ENCODE measurements at regions of chr1 and their contacts with region 1.

Region 1: GRCh38 chr1:181088079-181089016 is at the start of gene IER5:
- DNase-seq: peak; percentile 95 to 97
- H3K4me3 ChIP-seq: peak within 1 kb of the TSS; percentile 76
- H3K4me3 Mint-ChIP-seq: peak within 1 kb of the TSS; percentile 97
- H3K27ac Mint-ChIP-seq: peak within 1 kb of the TSS; percentile 64
- H3K4me1 ChIP-seq: peaks cover 30% of the 10 kb centered on the region
- H3K4me1 Mint-ChIP-seq: peaks cover 26% of the 10 kb centered on the region
- H3K27me3 ChIP-seq: no peaks in the 10 kb centered on the region
- H3K27me3 Mint-ChIP-seq: no peaks in the 10 kb centered on the region
- CTCF ChIP-seq: no peak
- total RNA-seq, gene IER5: 8.6 and 9.4 TPM in 2 replicates

Region 2: DNA sequence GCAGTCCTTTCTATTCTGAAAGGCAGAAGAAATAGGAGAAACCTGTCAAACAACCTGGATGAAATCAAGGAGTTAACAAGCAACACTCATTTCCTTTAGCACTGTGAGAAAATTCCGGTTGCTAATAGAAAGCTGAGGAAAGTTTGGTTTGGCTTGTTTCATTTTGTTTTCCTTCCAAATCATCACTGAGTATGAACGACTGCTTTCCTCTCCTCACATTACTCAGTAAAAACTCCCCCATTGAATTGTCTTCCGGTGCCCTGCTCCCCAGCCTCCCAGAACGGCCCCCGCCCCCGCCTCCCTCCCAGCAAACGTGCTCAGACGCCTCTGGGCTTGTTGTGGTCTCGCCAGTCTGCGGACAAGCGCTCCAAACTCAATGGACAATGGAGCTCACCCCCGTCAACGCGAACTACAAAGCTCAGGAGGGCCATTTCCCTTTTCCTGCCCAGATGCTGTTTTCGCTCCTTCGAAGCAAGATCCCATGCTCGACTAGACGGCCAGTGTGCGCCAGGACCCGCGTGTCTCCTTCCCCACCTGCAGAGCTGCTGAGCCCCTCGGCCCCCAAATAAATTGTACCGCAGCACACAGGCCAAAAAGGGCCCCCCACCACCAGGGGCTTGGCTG is 66.4 kb before region 1 on chr1:
- CTCF ChIA-PET with region 1: interaction called, 6 read pairs
- POLR2A ChIA-PET with region 1: interaction called, 3 read pairs
- intact Hi-C with region 1: loop called (anchors 1 kb)
- DNase-seq: peak; percentile 58 to 71
- H3K4me3 ChIP-seq: peak overlapping the region; percentile 81
- H3K4me3 Mint-ChIP-seq: peak overlapping the region; percentile 90
- H3K27ac Mint-ChIP-seq: peak overlapping the region; percentile 96
- H3K4me1 ChIP-seq: 0 out of 2 replicates have a peak, but pooled peaks cover 5% of the 10 kb centered on the region
- H3K4me1 Mint-ChIP-seq: peaks cover 8% of the 10 kb centered on the region
- H3K27me3 ChIP-seq: no peaks in the 10 kb centered on the region
- H3K27me3 Mint-ChIP-seq: peaks cover 3% of the 10 kb centered on the region
- CTCF ChIP-seq: no peak

Region 3: GRCh38 chr1:181038399-181038873 is 49.9 kb before region 1 on chr1:
- CTCF ChIA-PET with region 1: interaction called, 5 read pairs
- POLR2A ChIA-PET with region 1: no interaction called
- intact Hi-C with region 1: loop called (anchors 1 kb)
- DNase-seq: peak; percentile 79 to 85
- H3K4me3 ChIP-seq: no peak overlapping the region
- H3K4me3 Mint-ChIP-seq: no peak overlapping the region
- H3K27ac Mint-ChIP-seq: no peak overlapping the region
- H3K4me1 ChIP-seq: peaks cover 9% of the 10 kb centered on the region
- H3K4me1 Mint-ChIP-seq: peaks cover 13% of the 10 kb centered on the region
- H3K27me3 ChIP-seq: no peaks in the 10 kb centered on the region
- H3K27me3 Mint-ChIP-seq: no peaks in the 10 kb centered on the region
- CTCF ChIP-seq: peak; percentile 67 to 79

Region 4: GRCh38 chr1:181105134-181106021 is 17.0 kb after region 1 on chr1:
- CTCF ChIA-PET with region 1: interaction called, 5 read pairs
- POLR2A ChIA-PET with region 1: interaction called, 9 read pairs
- intact Hi-C with region 1: loop called (anchors 2 kb)
- DNase-seq: peak; percentile 93 to 94
- H3K4me3 ChIP-seq: peak overlapping the region; percentile 83
- H3K4me3 Mint-ChIP-seq: peak overlapping the region; percentile 76
- H3K27ac Mint-ChIP-seq: peak overlapping the region; percentile 86
- H3K4me1 ChIP-seq: peaks cover 51% of the 10 kb centered on the region
- H3K4me1 Mint-ChIP-seq: peaks cover 61% of the 10 kb centered on the region
- H3K27me3 ChIP-seq: no peaks in the 10 kb centered on the region
- H3K27me3 Mint-ChIP-seq: no peaks in the 10 kb centered on the region
- CTCF ChIP-seq: no peak

Region 5: GRCh38 chr1:181112071-181112929 is 24.0 kb after region 1 on chr1:
- CTCF ChIA-PET with region 1: interaction called, 4 read pairs
- POLR2A ChIA-PET with region 1: interaction called, 4 read pairs
- intact Hi-C with region 1: loop called (anchors 1 kb)
- DNase-seq: peak; percentile 92 to 95
- H3K4me3 ChIP-seq: no peak overlapping the region
- H3K4me3 Mint-ChIP-seq: peak overlapping the region; percentile 37
- H3K27ac Mint-ChIP-seq: peak overlapping the region; percentile 86
- H3K4me1 ChIP-seq: peaks cover 69% of the 10 kb centered on the region
- H3K4me1 Mint-ChIP-seq: peaks cover 66% of the 10 kb centered on the region
- H3K27me3 ChIP-seq: no peaks in the 10 kb centered on the region
- H3K27me3 Mint-ChIP-seq: no peaks in the 10 kb centered on the region
- CTCF ChIP-seq: no peak

Region 6: DNA sequence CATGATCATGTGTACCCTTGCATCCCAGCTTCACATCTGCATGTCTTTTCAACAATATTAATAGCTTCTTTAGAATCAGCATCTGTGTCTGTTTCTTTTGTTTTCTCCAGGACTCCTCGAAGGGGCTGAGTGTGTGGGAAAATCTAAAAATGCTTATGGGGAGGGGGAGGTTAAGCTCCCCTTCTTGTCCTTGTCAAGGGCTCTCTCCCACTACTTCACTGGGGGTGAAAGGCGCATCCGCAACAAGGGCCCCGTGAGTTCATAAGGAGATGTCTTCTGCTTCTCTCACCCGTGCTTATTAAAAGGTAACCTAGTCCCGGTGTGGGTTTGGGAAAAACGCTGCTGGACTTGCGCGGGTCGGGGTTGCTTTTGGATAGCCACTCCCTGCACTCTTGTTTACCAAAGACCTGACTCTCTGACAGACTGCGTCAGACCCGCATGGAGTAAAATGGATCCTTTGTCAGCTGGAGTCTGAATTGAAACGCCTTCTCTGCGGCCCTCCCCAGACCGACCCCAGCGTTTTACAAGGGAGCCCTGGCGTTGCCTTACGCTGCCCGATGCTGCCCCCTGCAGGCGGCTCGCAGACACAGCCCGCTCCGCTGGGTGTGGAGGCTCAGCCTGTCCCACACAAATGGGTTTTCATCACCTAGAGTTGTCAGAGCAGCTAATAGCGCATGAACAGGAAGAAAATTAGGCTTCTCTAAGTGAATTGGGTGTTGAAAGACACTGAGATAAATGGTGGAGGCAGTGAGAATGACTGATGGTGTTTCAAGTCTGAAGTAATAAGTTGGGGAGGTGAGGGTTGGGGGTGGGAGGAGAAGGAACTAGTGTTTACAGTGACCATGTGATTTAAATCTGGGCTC is 54.0 kb after region 1 on chr1:
- CTCF ChIA-PET with region 1: interaction called, 49 read pairs
- POLR2A ChIA-PET with region 1: no interaction called
- intact Hi-C with region 1: loop called (anchors 1 kb)
- DNase-seq: peak; percentile 87 to 92
- H3K4me3 ChIP-seq: peak overlapping the region; percentile 15; the same call in 1 of the 2 replicates
- H3K4me3 Mint-ChIP-seq: peak overlapping the region; percentile 26
- H3K27ac Mint-ChIP-seq: no peak overlapping the region
- H3K4me1 ChIP-seq: no peaks in the 10 kb centered on the region
- H3K4me1 Mint-ChIP-seq: peaks cover 16% of the 10 kb centered on the region
- H3K27me3 ChIP-seq: no peaks in the 10 kb centered on the region
- H3K27me3 Mint-ChIP-seq: peaks cover 3% of the 10 kb centered on the region
- CTCF ChIP-seq: peak; percentile 97 to 98

Region 7: DNA sequence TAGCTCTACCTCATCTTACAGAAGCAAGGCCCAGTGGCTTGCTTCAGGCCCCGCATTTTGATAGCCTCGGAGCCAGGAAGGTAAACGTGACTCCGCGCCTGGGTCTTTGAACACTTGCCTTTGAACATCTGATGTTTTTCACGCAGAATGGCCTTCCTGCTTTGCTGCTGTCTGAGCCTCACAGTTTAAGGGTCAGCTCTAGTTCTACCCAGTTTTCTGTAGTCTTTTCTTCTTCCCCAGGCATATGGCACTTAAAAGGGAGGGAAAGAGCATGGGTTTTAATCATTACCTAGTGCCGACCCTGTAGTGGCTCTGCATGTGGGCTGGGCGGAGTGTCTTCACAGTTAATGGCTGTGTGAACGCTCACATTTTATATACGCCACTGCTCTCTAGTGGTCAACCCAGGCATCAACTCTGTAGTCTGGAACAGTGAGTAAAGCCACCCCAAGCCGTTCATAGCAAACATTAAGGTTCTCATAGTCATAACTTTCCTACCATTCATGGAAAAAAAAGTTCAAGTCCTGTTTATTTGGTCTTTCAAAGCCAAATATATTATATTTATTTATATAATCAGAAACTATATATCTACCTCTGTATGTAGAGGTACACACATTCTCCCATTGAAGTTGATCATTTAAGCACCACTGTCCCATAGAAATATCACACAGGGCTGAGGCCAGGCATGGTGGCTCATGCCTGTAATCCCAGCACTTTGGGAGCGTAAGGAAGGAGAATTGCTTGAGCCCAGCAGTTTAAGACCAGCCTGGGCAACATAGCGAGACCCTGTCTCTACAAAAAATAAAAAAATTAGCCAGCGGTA is 78.2 kb after region 1 on chr1:
- CTCF ChIA-PET with region 1: interaction called, 3 read pairs
- POLR2A ChIA-PET with region 1: no interaction called
- intact Hi-C with region 1: loop called (anchors 1 kb)
- DNase-seq: peak; percentile 70 to 74
- H3K4me3 ChIP-seq: no peak overlapping the region
- H3K4me3 Mint-ChIP-seq: peak overlapping the region; percentile 52
- H3K27ac Mint-ChIP-seq: no peak overlapping the region
- H3K4me1 ChIP-seq: no peaks in the 10 kb centered on the region
- H3K4me1 Mint-ChIP-seq: no peaks in the 10 kb centered on the region
- H3K27me3 ChIP-seq: no peaks in the 10 kb centered on the region
- H3K27me3 Mint-ChIP-seq: no peaks in the 10 kb centered on the region
- CTCF ChIP-seq: peak; percentile 70 to 81